ENCODE measurements at regions of chr6 and their contacts with region 1.

Region 1: GRCh38 chr6:11575408-11576033 is 38.0 kb downstream of the TMEM170B start:
- DNase-seq: peak; percentile 72
- H3K4me3 ChIP-seq: no peak overlapping the region
- H3K27ac ChIP-seq: no peak overlapping the region
- H3K4me1 ChIP-seq: no peaks in the 10 kb centered on the region
- CTCF ChIP-seq: peak; percentile 95

Region 2: GRCh38 chr6:10954590-10955010 is 620.9 kb before region 1 on chr6:
- CTCF ChIA-PET with region 1: no interaction called
- POLR2A ChIA-PET with region 1: no interaction called
- intact Hi-C with region 1: loop called (anchors 10 kb)
- DNase-seq: peak; percentile 71
- H3K4me3 ChIP-seq: no peak overlapping the region
- H3K27ac ChIP-seq: no peak overlapping the region
- H3K4me1 ChIP-seq: no peaks in the 10 kb centered on the region
- CTCF ChIP-seq: peak; percentile 92

Region 3: DNA sequence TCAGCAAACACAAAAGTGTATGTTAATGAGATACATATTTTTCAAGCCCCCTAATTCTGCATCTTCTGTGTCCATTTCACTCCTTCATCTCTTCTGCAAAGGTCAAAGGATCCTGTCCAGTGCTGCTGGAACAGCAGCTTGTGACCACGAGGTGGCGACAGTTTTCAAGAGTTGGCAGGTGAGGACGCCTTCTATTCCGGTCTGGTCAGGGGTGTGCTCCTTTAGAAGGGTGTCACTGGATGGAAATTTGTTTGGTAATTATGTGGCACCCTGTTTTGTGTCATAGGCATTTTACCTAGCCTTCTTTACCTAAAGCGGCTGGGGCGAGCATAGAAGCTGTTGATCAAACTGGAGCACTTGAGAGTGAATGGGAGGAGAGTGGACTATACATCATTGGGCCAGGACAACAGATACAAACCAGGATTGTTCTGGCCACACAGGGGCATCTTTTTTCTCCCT is 431.1 kb before region 1 on chr6:
- CTCF ChIA-PET with region 1: no interaction called
- POLR2A ChIA-PET with region 1: no interaction called
- intact Hi-C with region 1: loop called (anchors 1 kb)
- DNase-seq: peak; percentile 71
- H3K4me3 ChIP-seq: no peak overlapping the region
- H3K27ac ChIP-seq: no peak overlapping the region
- H3K4me1 ChIP-seq: no peaks in the 10 kb centered on the region
- CTCF ChIP-seq: peak; percentile 98

Region 4: DNA sequence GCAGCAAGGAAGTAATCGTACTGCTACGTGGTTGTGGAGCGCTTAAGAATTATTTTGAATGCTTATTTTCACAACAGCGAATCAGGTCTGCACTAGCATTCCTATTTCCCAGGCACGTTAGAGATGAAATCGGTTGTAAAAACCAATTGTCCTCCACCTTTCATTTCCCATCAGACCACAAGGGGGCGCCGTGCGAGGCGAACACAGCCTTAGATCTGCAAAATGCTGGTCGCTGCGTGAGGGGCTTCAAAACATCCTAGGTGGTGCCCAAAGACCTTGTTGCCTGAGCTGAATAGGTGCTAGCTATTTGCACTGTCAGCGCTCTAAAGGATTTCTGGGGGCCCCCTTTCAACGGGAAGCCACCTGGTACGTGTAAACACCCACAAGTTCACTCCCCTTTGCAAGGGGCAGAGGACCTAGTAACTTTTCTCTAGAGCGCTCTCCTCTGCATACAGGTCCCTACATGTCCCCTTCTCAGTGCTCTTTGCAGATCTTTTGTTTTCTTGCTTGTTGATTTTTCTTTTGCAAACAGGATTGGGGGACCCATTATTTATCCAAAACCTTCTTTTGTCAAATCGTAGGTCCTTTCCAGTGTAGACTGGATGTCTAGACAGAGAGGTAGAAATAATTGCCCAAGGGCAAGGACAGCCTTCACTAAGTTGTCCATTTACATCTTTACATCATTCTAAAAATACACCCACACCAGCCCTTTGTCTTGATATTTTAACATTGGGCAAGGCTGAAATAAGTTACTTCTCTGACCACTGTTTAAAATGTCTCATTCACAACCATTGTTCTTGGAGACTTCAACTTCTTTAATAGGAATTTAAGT is 402.8 kb before region 1 on chr6:
- CTCF ChIA-PET with region 1: no interaction called
- POLR2A ChIA-PET with region 1: no interaction called
- intact Hi-C with region 1: loop called (anchors 10 kb)
- DNase-seq: peak; percentile 66
- H3K4me3 ChIP-seq: no peak overlapping the region
- H3K27ac ChIP-seq: no peak overlapping the region
- H3K4me1 ChIP-seq: no peaks in the 10 kb centered on the region
- CTCF ChIP-seq: peak; percentile 94

Region 5: DNA sequence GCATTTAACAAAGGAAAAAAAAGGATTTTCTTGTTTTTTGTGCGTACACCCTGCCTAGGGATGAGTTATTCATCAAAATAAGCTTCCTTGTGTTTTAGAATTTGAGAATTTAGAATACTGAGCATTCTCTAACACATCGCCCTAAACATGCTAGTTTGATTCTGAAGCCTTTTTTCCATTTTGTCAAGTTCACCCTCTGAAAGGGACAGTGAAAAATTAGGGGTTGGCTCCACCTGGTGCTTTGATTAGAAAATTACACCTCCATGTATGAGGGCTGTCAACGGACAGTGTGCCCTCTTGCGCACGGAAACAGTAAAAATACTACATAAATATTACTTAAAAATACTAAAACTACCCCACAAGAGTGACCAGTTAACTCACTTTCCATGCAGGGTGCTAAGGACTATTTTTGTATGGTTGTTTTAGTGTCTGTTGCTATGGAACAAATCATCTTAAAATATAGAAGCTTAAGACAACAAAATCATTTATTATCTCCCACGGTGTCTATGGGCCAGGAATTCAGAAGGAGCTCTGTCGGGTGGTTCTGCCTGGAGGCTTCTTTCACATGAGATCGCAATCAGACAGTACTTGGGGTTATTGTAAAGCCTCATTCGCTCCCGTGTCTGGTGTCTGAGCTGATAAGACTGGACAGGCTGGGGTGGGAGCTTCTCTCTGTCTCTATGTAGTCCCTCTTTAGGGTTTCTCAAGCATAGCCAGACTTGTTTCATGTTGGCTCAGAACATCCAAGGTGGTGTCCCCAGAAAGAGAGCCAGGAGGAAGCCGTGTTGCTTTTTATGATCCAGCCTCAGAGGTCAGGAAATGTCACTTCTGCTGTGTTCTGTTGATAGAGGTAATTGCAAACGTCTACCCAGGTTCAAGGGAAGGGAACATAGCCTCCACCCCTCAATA is 79.1 kb before region 1 on chr6:
- CTCF ChIA-PET with region 1: interaction called, 4 read pairs
- POLR2A ChIA-PET with region 1: interaction called, 5 read pairs
- intact Hi-C with region 1: loop called (anchors 1 kb)
- DNase-seq: peak; percentile 84
- H3K4me3 ChIP-seq: no peak overlapping the region
- H3K27ac ChIP-seq: no peak overlapping the region
- H3K4me1 ChIP-seq: peaks cover 28% of the 10 kb centered on the region
- CTCF ChIP-seq: peak; percentile 100

Region 6: DNA sequence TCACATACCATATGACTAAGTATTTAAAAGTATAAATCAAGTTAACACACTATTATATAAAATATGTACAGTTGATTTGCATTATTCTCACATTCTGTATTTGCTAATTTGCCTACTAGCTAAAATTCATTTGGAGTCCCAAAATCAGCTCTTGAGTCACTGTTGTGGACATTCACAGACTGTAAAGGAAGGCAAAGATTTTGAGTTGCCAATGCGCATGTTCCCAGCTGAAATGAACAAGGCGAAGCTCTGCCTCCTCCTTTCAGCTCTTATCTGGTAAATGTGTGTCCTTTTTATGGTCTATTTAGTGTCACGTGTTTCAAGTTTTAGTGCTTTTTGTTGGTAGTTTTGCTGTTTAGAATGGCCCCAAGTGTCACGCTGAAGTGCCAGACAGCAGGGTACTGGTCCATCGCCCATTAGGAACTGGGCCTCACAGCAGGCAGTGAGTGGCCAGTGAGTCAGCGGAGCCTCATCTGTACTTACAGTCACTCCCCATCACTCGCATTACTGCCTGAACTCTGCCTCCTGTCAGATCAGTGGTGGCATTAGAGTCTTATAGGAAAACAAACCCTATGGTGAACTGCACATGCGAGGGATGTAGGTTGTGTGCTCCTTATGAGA is 290.3 kb after region 1 on chr6:
- CTCF ChIA-PET with region 1: no interaction called
- POLR2A ChIA-PET with region 1: no interaction called
- intact Hi-C with region 1: no loop called
- DNase-seq: no peak
- H3K4me3 ChIP-seq: no peak overlapping the region
- H3K27ac ChIP-seq: no peak overlapping the region
- H3K4me1 ChIP-seq: no peaks in the 10 kb centered on the region
- CTCF ChIP-seq: no peak